ENCODE measurements at regions of chr20 and their contacts with region 1.

Region 1: GRCh38 chr20:4082406-4083097 is 67.2 kb upstream of the RNF24 start:
- DNase-seq: peak; percentile 69
- ATAC-seq: peak; percentile 78
- H3K4me3 Mint-ChIP-seq: peak overlapping the region; percentile 21
- H3K27ac Mint-ChIP-seq: peak overlapping the region; percentile 85
- H3K4me1 Mint-ChIP-seq: peaks cover 45% of the 10 kb centered on the region
- H3K27me3 Mint-ChIP-seq: no peaks in the 10 kb centered on the region
- CTCF ChIP-seq: no peak

Region 2: DNA sequence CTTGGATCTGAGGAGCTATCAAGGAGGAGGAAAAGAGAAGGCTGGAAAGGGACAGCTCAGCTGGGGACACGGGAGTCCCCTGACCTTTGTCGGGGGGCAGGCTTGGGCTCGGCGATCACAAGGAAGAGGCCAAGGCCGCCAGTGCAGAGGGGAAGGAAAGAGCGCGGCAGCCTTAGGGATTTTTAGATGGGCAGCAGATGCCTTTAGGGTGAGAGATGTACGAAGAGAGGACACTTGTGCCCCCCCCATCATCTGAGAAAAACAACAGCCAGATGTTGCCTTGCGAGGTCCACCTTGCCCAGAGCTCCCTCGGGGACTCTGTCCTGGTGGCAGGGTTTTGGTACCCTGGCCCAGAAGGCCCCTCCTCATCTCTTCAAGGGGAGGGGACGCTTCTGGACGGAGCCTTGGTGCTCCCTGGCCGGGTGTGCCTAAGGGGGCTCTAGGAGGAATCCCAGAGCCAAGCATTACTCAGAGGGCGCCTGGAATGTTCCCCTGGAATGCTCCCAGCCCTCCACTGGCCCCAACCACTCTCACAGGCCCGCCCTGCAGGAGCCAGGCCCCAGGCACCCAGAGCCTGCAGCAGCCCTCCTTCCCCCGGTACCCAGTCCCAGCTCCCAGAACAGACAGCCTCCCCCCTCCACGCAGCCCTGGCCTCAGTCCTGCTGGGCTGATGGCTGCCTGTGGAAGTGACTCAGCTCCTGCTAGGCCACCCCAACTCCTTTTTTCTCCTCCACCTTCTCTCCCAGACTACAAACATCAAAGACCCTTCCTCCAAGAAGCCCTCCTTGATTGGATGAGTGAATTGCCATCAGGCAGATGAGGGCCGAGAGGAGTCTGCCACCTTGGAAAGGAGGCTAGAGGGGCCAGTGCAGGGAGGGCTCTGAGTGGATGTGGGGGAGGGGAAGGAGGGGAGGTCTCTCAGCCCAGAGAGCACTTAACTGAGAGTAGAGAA is 402.5 kb before region 1 on chr20:
- CTCF ChIA-PET with region 1: interaction called, 13 read pairs
- POLR2A ChIA-PET with region 1: no interaction called
- intact Hi-C with region 1: no loop called
- DNase-seq: no peak
- ATAC-seq: no peak
- H3K4me3 Mint-ChIP-seq: no peak overlapping the region
- H3K27ac Mint-ChIP-seq: no peak overlapping the region
- H3K4me1 Mint-ChIP-seq: no peaks in the 10 kb centered on the region
- H3K27me3 Mint-ChIP-seq: peaks cover 43% of the 10 kb centered on the region
- CTCF ChIP-seq: no peak

Region 3: DNA sequence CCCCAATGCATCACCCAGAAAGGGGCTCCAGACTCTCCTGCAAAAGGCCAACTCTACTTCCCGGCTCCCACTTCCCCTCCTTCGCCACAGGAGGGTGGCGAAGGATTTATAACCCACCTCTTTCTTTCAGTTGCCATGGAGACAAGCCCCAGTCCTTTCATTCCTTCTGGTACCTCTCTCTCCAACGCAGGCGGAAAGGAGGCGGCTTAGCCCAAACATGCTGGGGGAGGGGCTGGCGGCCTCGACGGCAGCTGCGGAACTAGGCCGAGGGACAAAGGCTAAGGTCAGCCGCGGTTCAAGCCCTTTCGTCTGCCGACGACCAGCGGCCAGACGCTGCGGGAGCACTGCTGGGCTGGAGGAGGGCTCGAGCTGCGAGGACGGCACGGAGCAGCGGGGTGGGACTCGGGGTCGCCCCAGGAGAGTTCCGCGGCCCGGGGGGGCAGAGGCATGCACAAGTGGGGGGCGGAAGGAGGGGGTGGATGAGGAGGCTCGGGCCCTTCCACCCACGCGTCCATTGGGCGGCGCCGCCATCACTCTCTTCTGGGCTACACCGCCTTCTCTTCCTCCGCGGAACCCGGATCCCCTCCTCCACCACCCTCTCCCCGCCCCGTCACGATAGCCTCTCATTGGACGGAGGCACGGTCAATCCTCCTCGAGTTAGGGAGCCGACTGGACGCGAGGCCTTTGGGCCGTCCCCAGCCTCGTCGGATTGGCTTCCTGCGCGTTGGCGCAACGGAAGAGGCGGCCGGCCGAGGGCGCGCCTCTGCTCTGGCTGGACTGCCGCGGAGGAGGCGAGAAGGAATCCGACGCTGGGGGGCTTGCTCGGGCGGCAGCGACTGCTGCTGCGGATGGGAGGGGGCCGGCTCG is 193.7 kb before region 1 on chr20 and contains the start of gene PANK2:
- CTCF ChIA-PET with region 1: interaction called, 7 read pairs
- POLR2A ChIA-PET with region 1: no interaction called
- intact Hi-C with region 1: loop called (anchors 10 kb)
- DNase-seq: peak; percentile 98
- ATAC-seq: peak; percentile 98
- H3K4me3 Mint-ChIP-seq: peak within 1 kb of the TSS; percentile 100
- H3K27ac Mint-ChIP-seq: peak within 1 kb of the TSS; percentile 98
- H3K4me1 Mint-ChIP-seq: peaks cover 38% of the 10 kb centered on the region
- H3K27me3 Mint-ChIP-seq: no peaks in the 10 kb centered on the region
- CTCF ChIP-seq: no peak
- total RNA-seq, gene PANK2: 47.6 to 50.3 TPM

Region 4: DNA sequence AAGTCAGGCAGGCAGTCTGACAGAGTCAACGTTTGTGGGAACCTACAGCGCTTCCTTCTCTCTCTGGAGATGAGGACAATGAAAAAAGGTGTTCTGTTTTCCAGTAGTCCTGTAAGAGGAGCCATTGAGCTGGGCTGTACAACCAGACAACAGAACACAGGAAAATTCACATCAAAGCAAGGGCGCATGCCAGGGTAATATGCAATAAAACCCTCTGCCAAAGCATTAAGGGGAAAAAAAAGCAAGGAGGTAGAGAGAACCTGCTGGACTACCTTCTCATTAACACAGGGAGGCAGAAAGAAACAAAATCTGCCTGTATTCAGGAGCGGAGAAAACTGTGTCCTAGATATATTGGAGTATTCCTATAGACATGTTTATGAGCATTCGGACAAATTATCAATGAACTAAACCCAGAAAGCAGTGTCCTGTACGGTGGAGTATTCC is 68.5 kb before region 1 on chr20:
- CTCF ChIA-PET with region 1: interaction called, 33 read pairs
- POLR2A ChIA-PET with region 1: interaction called, 4 read pairs
- intact Hi-C with region 1: loop called (anchors 5 kb)
- DNase-seq: peak; percentile 24
- ATAC-seq: no peak
- H3K4me3 Mint-ChIP-seq: peak overlapping the region; percentile 90
- H3K27ac Mint-ChIP-seq: no peak overlapping the region
- H3K4me1 Mint-ChIP-seq: peaks cover 40% of the 10 kb centered on the region
- H3K27me3 Mint-ChIP-seq: no peaks in the 10 kb centered on the region
- CTCF ChIP-seq: peak; percentile 17

Region 5: DNA sequence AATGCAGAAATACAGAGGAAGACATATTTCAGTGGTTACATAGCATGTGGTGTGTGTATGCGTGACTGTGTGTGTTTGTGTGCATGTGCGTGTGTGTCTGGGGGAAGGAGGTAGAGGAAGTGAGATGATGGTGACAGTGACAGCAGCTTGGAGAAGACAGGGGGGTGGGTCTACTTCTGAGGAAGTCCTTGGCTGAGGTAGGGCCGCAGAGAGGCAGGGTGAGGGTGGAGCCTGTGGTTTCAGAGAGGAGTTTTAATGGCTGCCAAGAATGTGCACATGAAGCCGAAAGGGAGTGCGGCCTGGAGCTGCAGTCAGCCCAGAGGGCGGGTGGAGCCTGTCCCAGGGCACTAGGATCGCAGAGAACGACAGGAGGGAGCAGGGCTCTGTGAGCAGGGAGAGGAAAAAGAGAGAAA is 44.5 kb before region 1 on chr20:
- CTCF ChIA-PET with region 1: interaction called, 6 read pairs
- POLR2A ChIA-PET with region 1: interaction called, 3 read pairs
- intact Hi-C with region 1: loop called (anchors 5 kb)
- DNase-seq: peak; percentile 91
- ATAC-seq: peak; percentile 100
- H3K4me3 Mint-ChIP-seq: peak overlapping the region; percentile 77
- H3K27ac Mint-ChIP-seq: peak overlapping the region; percentile 99
- H3K4me1 Mint-ChIP-seq: peaks cover 20% of the 10 kb centered on the region
- H3K27me3 Mint-ChIP-seq: no peaks in the 10 kb centered on the region
- CTCF ChIP-seq: no peak

Measured in activated CD8-positive, alpha-beta T cell treated with anti-CD3 and anti-CD28 coated beads for 36 hours (primary cell).